ENCODE measurements at regions of chr4 and their contacts with region 1.

Region 1: GRCh38 chr4:15882675-15883086 is 55.9 kb downstream of the FGFBP1 start:
- DNase-seq: no peak
- H3K4me3 ChIP-seq: no peak overlapping the region
- H3K27ac ChIP-seq: no peak overlapping the region
- H3K4me1 ChIP-seq: no peaks in the 10 kb centered on the region
- H3K27me3 ChIP-seq: no peaks in the 10 kb centered on the region
- CTCF ChIP-seq: peak; percentile 59 to 83 (median 79)

Region 2: GRCh38 chr4:15956179-15956850 is 73.6 kb after region 1 on chr4:
- intact Hi-C with region 1: loop called (anchors 1 kb)
- DNase-seq: peak; percentile 36 to 86
- H3K4me3 ChIP-seq: no peak overlapping the region
- H3K27ac ChIP-seq: no peak overlapping the region
- H3K4me1 ChIP-seq: no peaks in the 10 kb centered on the region
- H3K27me3 ChIP-seq: no peaks in the 10 kb centered on the region
- CTCF ChIP-seq: peak; percentile 73 to 87 (median 86)

Region 3: DNA sequence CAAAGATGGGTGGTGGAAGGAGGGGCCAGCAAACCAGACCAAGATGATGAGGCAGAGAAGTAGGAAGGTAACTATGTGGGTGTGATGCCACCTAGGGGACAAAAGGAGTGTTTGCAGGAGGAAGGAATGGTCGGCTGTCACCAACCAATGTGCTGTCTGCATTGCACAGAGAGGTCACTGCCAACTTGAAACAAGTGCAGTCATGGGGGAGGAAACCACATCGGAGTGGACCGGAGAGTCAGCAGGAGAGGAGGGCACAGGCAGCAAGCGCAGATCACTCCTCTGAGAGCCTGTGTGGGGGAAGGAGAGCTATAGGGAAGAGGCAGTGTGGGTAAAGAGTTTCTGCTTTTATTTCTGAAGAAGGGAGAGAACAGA is 118.8 kb after region 1 on chr4:
- intact Hi-C with region 1: loop called (anchors 5 kb)
- DNase-seq: peak in 1 of 2 donors; percentile 74
- H3K4me3 ChIP-seq: no peak overlapping the region
- H3K27ac ChIP-seq: no peak overlapping the region
- H3K4me1 ChIP-seq: no peaks in the 10 kb centered on the region
- H3K27me3 ChIP-seq: no peaks in the 10 kb centered on the region
- CTCF ChIP-seq: peak; percentile 66 to 77 (median 66)

Region 4: DNA sequence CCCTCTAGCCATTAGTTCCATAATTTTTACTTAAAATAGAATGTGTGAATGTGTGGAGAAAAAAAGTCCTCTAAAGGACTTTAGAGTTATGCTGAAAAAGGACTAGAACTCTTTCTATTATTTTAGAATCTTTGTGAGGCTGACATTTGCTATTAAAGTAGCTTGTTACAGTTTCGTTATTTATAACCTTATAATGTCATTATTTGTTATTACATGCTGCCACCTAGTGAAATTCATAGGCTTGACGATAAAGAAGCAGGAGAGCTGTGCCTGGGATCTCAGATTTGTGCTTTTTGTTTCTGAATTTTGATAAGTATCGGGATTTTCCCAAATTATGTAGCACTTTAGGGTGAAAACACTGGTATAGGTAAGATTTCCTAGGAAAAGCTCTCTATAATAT is 382.1 kb after region 1 on chr4:
- intact Hi-C with region 1: loop called (anchors 2 kb)
- DNase-seq: no peak
- H3K4me3 ChIP-seq: no peak overlapping the region
- H3K27ac ChIP-seq: no peak overlapping the region
- H3K4me1 ChIP-seq: peaks cover 3 to 10% of the 10 kb centered on the region in 2 donors
- H3K27me3 ChIP-seq: no peaks in the 10 kb centered on the region
- CTCF ChIP-seq: peak; percentile 38 to 72 (median 60)